ENCODE measurements at regions of chr5 and their contacts with region 1.

Region 1: DNA sequence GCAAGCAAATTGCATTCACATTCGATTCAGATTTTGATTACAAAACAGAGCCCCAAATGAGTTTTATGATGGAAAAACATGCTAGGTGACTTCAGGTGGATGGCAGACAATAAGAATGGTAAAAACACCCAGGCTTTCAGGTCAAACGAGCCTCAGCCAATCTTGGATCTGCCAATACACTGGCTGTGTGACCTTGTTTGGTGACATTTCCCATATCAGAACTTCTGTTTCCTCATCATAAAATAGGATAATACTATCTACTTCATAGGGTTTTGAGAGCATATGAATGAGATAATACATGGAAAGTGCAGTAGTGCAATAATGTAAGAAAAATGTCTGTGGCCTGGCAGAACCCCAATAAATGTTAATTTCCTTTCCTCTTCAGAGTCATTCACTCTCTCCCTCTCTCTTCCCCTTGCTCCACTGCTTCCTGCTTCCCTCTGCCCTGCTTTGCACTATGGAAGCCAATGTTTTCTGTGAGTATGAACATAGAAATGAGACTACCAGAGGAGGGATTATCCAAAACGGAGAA is 54.7 kb downstream of the SH3RF2 start:
- DNase-seq: no peak
- H3K4me3 ChIP-seq: no peak overlapping the region
- H3K27ac ChIP-seq: no peak overlapping the region
- H3K4me1 ChIP-seq: no peaks in the 10 kb centered on the region
- H3K27me3 ChIP-seq: peaks cover 0 to 1% (median 0%) of the 10 kb centered on the region in 4 experiments; a peak in 1 of 7 replicates
- CTCF ChIP-seq: no peak
- EP300 ChIP-seq: no peak
- POLR2A ChIP-seq: no peak
- RAD21 ChIP-seq: no peak

Region 2: DNA sequence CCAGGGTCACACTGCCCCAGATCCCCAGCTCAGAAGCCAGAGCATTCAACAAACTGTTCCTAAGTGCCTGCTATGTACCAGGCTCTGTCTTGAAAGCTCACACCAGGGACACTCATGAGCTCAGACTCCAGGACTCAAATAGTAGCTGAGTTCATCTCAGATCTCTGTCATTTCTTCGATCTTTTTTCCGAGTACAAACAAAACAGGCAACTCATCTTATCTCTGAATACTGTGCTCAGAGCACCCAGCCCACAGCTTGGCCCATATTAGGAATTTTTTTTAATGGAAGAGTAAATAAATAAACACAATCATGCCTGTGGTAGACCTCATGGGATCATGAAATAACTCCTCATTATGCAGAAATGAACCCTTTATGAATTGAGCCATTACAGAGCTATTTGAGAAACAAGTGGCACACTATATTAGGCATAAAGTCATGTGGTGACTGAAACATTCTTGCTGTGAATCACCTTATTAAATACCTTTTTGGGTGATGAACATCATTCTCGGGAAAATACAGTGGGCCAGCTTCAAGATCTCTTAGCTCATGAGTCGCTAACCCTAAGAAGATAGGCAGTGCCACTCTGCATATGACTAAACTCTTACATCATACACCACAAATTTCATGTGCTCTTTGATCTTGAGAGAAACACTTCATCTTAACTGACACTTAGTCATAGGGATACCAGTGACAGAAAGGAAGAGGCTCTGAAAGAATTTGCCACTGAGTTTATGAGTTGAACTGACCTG is 44.8 kb before region 1 on chr5:
- CTCF ChIA-PET with region 1: no interaction called
- POLR2A ChIA-PET with region 1: no interaction called
- DNase-seq: no peak
- H3K4me3 ChIP-seq: no peak overlapping the region
- H3K27ac ChIP-seq: no peak overlapping the region
- H3K4me1 ChIP-seq: peaks cover 0 to 7% (median 4%) of the 10 kb centered on the region in 4 experiments; a peak in 4 of 7 replicates
- H3K27me3 ChIP-seq: no peaks in the 10 kb centered on the region
- CTCF ChIP-seq: no peak
- EP300 ChIP-seq: no peak
- POLR2A ChIP-seq: no peak
- RAD21 ChIP-seq: no peak

Region 3: GRCh38 chr5:145960848-145961600 is 30.1 kb before region 1 on chr5:
- CTCF ChIA-PET with region 1: no interaction called
- POLR2A ChIA-PET with region 1: no interaction called
- DNase-seq: no peak
- H3K4me3 ChIP-seq: no peak overlapping the region
- H3K27ac ChIP-seq: no peak overlapping the region
- H3K4me1 ChIP-seq: no peaks in the 10 kb centered on the region
- H3K27me3 ChIP-seq: no peaks in the 10 kb centered on the region
- CTCF ChIP-seq: no peak
- EP300 ChIP-seq: no peak
- POLR2A ChIP-seq: no peak
- RAD21 ChIP-seq: no peak

Region 4: DNA sequence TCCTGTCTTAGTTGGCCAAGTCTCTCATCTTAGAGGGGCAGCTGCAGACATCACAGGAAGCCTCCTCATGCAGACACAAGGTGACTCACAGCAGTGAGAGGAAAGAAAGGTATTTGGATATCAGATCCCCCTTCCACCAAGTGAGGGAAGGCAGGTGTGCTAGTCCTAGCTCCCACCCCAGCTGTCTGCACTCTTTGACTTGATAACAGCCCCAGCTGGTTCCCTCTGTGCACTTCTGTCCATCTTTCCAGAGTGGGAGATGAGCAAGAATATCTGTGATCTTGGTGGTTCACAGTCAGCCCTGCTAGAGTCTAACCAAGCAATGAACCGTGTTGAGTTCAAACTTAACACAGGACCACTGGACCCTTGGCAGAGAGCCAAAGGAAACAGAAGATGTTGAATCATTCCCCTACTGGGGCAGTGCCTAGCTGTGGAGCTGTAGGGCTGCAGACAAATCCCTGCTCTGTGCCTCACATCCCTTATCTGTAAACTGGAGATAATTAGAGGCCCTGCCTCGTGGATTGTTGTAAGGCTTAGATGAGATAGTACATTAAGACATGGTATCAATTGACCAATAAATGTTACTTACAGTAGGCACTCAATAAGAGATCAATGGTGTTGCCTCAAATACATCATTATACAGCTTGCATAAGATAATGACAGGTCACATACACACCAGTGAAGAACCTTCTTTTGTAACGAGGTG is 15.6 kb before region 1 on chr5:
- CTCF ChIA-PET with region 1: interaction called, 16 read pairs
- POLR2A ChIA-PET with region 1: interaction called, 4 read pairs
- DNase-seq: no peak
- H3K4me3 ChIP-seq: no peak overlapping the region
- H3K27ac ChIP-seq: no peak overlapping the region
- H3K4me1 ChIP-seq: peaks cover 0 to 4% (median 1%) of the 10 kb centered on the region in 4 experiments; a peak in 2 of 7 replicates
- H3K27me3 ChIP-seq: no peaks in the 10 kb centered on the region
- CTCF ChIP-seq: no peak
- EP300 ChIP-seq: no peak
- POLR2A ChIP-seq: no peak
- RAD21 ChIP-seq: no peak

Region 5: GRCh38 chr5:146111409-146111808 is 120.3 kb after region 1 on chr5:
- CTCF ChIA-PET with region 1: no interaction called
- POLR2A ChIA-PET with region 1: no interaction called
- DNase-seq: no peak
- H3K4me3 ChIP-seq: no peak overlapping the region
- H3K27ac ChIP-seq: no peak overlapping the region
- H3K4me1 ChIP-seq: no peaks in the 10 kb centered on the region
- H3K27me3 ChIP-seq: no peaks in the 10 kb centered on the region
- CTCF ChIP-seq: no peak
- EP300 ChIP-seq: no peak
- POLR2A ChIP-seq: no peak; a peak in 1 of 3 replicates
- RAD21 ChIP-seq: no peak

Measured in H1 (cell line).